A673 (cell line): ENCODE measurements at regions of chr10 and their contacts with region 1.

Region 1: GRCh38 chr10:72223743-72224101 is 7.6 kb upstream of the ASCC1 start:
- DNase-seq: no peak
- H3K4me3 ChIP-seq: no peak overlapping the region
- H3K27ac ChIP-seq: peak overlapping the region; percentile 18
- H3K4me1 ChIP-seq: peaks cover 31% of the 10 kb centered on the region
- H3K27me3 ChIP-seq: no peaks in the 10 kb centered on the region
- CTCF ChIP-seq: no peak

Region 2: GRCh38 chr10:71924771-71925170 is 299.0 kb before region 1 on chr10:
- CTCF ChIA-PET with region 1: interaction called, 12 read pairs
- POLR2A ChIA-PET with region 1: no interaction called
- intact Hi-C with region 1: no loop called
- DNase-seq: no peak
- H3K4me3 ChIP-seq: no peak overlapping the region
- H3K27ac ChIP-seq: no peak overlapping the region
- H3K4me1 ChIP-seq: peaks cover 13% of the 10 kb centered on the region
- H3K27me3 ChIP-seq: peaks cover 3% of the 10 kb centered on the region
- CTCF ChIP-seq: no peak

Region 3: DNA sequence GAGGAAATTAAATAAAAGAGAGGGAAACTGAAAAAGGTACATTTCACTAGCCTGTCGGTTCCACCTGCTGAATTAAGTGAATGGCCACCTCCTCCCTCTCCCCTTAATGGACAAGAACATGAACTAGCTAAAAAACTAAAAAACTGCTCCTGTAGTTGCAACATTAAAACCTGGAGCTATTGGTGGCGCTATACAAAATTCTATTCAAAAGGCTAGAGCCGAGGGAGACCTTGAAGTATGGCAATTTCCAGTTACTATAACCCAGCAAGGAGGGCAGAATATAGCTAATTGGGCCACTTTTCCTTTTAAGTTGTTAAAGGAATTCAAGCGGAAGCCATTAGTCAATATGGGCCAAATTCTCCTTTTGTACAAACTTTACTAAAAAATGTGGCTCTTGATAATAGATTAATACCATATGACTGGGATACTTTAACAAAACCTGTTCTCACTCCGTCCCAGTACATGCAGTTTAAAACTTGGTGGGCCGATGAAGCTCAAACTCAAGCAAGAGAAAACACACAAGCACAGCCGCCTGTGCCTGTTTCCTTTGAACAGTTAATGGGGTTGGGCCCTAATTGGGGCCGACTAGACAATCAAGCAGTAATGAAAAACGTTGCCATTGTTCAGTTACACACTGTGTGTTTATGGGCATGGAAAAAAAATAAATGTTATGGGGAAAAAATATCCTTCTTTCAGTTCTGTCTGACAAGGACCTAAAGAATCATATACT is 266.0 kb before region 1 on chr10:
- CTCF ChIA-PET with region 1: no interaction called
- POLR2A ChIA-PET with region 1: no interaction called
- intact Hi-C with region 1: loop called (anchors 10 kb)
- DNase-seq: peak; percentile 37
- H3K4me3 ChIP-seq: no peak overlapping the region
- H3K27ac ChIP-seq: no peak overlapping the region
- H3K4me1 ChIP-seq: no peaks in the 10 kb centered on the region
- H3K27me3 ChIP-seq: no peaks in the 10 kb centered on the region
- CTCF ChIP-seq: peak; percentile 41; the same call in 1 of the 2 replicates

Region 4: GRCh38 chr10:72056932-72057751 is 166.6 kb before region 1 on chr10:
- CTCF ChIA-PET with region 1: no interaction called
- POLR2A ChIA-PET with region 1: no interaction called
- intact Hi-C with region 1: no loop called
- DNase-seq: no peak
- H3K4me3 ChIP-seq: no peak overlapping the region
- H3K27ac ChIP-seq: no peak overlapping the region
- H3K4me1 ChIP-seq: peaks cover 9% of the 10 kb centered on the region
- H3K27me3 ChIP-seq: no peaks in the 10 kb centered on the region
- CTCF ChIP-seq: no peak

Region 5: GRCh38 chr10:72126184-72126871 is 97.4 kb before region 1 on chr10:
- CTCF ChIA-PET with region 1: interaction called, 6 read pairs
- POLR2A ChIA-PET with region 1: no interaction called
- intact Hi-C with region 1: loop called (anchors 5 kb)
- DNase-seq: peak; percentile 63
- H3K4me3 ChIP-seq: no peak overlapping the region
- H3K27ac ChIP-seq: no peak overlapping the region
- H3K4me1 ChIP-seq: peaks cover 5% of the 10 kb centered on the region
- H3K27me3 ChIP-seq: no peaks in the 10 kb centered on the region
- CTCF ChIP-seq: peak; percentile 66

Region 6: GRCh38 chr10:72248468-72249151 is 24.9 kb after region 1 on chr10:
- CTCF ChIA-PET with region 1: no interaction called
- POLR2A ChIA-PET with region 1: no interaction called
- intact Hi-C with region 1: no loop called
- DNase-seq: no peak
- H3K4me3 ChIP-seq: no peak overlapping the region
- H3K27ac ChIP-seq: peak overlapping the region; percentile 4
- H3K4me1 ChIP-seq: peaks cover 21% of the 10 kb centered on the region
- H3K27me3 ChIP-seq: no peaks in the 10 kb centered on the region
- CTCF ChIP-seq: no peak